ENCODE measurements at regions of chr2 and their contacts with region 1.

Region 1: GRCh38 chr2:167342769-167343168 is 454.5 kb downstream of the XIRP2 start:
- DNase-seq: peak; percentile 14
- H3K4me3 ChIP-seq: no peak overlapping the region
- H3K27ac ChIP-seq: no peak overlapping the region
- H3K4me1 ChIP-seq: no peaks in the 10 kb centered on the region; a peak in 1 of 4 replicates
- H3K27me3 ChIP-seq: no peaks in the 10 kb centered on the region
- CTCF ChIP-seq: peak; percentile 32
- EP300 ChIP-seq: no peak
- RAD21 ChIP-seq: peak; percentile 63

Region 2: GRCh38 chr2:167353605-167354280 is 11.0 kb after region 1 on chr2:
- CTCF ChIA-PET with region 1: interaction called, 12 read pairs
- POLR2A ChIA-PET with region 1: no interaction called
- DNase-seq: no peak
- H3K4me3 ChIP-seq: no peak overlapping the region
- H3K27ac ChIP-seq: no peak overlapping the region
- H3K4me1 ChIP-seq: no peaks in the 10 kb centered on the region; a peak in 1 of 4 replicates
- H3K27me3 ChIP-seq: no peaks in the 10 kb centered on the region
- CTCF ChIP-seq: no peak
- EP300 ChIP-seq: no peak
- RAD21 ChIP-seq: no peak

Measured in SK-N-SH (cell line).